Naive thymus-derived CD8-positive, alpha-beta T cell (primary cell): ENCODE measurements at regions of chr19 and their contacts with region 1.

Region 1: GRCh38 chr19:56121180-56122167 is at the start of gene ZNF787:
- DNase-seq: peak; percentile 94 to 99 (median 96)
- ATAC-seq: peak; percentile 85 to 91
- H3K4me3 Mint-ChIP-seq: peak within 1 kb of the TSS; percentile 85 to 97 (median 91)
- H3K27ac Mint-ChIP-seq: peak within 1 kb of the TSS; percentile 85 to 98 (median 96)
- H3K4me1 Mint-ChIP-seq: peaks cover 13 to 47% (median 38%) of the 10 kb centered on the region in 4 donors
- H3K27me3 Mint-ChIP-seq: no peaks in the 10 kb centered on the region
- polyA plus RNA-seq, gene ZNF787: 0.49 to 1.9 (median 1.2) TPM

Region 2: DNA sequence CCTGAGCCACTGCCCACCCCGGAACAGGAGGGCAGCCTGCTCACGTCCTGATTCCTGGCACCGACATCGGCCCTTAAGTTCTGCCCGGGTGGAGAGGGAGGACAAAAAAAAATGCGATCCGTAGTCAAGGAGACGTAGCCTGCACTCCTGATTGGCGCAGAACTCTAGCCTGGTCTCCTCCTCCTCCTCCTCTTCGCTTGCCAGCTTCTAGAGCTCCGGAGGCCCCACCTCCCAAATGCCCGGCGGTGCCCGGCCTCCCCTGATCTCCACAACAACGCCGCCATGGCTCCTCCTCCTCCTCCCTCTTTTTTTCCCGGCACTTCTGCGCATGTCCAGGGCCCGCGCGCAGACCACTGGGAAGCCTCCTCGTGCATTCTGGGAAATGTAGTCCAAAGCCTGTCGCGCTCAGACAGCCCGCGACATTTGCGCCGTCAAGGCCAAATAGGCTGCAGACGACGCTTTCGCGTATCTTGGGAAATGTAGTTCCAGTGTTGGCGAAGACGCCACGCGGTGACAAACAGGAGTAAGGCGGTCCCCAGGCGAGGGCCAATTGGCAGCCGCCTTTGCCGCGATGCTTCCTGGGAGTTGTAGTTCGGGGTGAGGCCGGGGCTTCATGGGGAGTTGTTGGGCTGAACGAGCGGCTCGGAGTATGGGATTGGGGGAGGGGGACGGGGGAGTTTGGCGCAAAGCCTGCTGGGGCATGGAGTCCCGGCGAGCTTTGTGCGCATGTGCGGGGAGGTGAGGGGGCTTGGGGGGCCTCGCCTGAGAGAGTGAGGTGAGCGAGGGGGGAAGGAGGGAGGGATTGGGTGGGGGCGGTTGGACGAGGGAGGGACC is 19.3 kb after region 1 on chr19 and contains the start of gene ZNF444:
- POLR2A ChIA-PET with region 1: interaction called, 76 read pairs
- DNase-seq: peak; percentile 95 to 100 (median 100)
- ATAC-seq: peak; percentile 88 to 89
- H3K4me3 Mint-ChIP-seq: peak within 1 kb of the TSS; percentile 90 to 98 (median 94)
- H3K27ac Mint-ChIP-seq: peak within 1 kb of the TSS; percentile 91 to 98 (median 96)
- H3K4me1 Mint-ChIP-seq: peaks cover 24 to 50% (median 46%) of the 10 kb centered on the region in 4 donors
- H3K27me3 Mint-ChIP-seq: no peaks in the 10 kb centered on the region
- polyA plus RNA-seq, gene ZNF444: 12.9 to 26.9 (median 19.2) TPM

Region 3: DNA sequence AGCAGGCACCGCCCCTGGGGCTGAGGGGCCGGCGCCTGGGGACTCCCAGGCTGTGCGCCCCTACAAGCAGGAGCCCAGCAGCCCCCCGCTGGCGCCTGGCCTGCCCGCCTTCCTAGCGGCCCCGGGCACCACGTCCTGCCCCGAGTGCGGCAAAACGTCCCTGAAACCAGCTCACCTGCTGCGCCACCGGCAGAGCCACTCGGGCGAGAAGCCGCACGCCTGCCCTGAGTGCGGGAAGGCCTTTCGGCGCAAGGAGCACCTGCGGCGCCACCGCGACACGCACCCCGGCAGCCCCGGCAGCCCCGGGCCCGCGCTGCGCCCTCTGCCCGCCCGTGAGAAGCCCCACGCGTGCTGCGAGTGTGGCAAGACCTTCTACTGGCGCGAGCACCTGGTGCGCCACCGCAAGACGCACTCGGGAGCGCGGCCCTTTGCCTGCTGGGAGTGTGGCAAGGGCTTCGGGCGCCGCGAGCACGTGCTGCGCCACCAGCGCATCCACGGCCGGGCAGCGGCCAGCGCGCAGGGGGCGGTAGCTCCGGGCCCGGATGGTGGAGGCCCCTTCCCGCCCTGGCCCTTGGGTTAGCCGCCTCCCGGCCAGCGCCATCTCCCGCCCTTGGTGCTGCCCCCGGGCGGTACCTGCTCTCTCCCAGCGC is 38.3 kb after region 1 on chr19:
- POLR2A ChIA-PET with region 1: no interaction called
- DNase-seq: no peak
- ATAC-seq: no peak
- H3K4me3 Mint-ChIP-seq: no peak overlapping the region
- H3K27ac Mint-ChIP-seq: no peak overlapping the region
- H3K4me1 Mint-ChIP-seq: peaks cover 2 to 13% (median 8%) of the 10 kb centered on the region in 4 donors
- H3K27me3 Mint-ChIP-seq: peaks cover 0 to under 1% (median 0%) of the 10 kb centered on the region in 5 donors

Region 4: GRCh38 chr19:56199686-56200085 is 78.2 kb after region 1 on chr19:
- POLR2A ChIA-PET with region 1: no interaction called
- DNase-seq: no peak
- ATAC-seq: no peak
- H3K4me3 Mint-ChIP-seq: no peak overlapping the region
- H3K27ac Mint-ChIP-seq: no peak overlapping the region
- H3K4me1 Mint-ChIP-seq: no peaks in the 10 kb centered on the region
- H3K27me3 Mint-ChIP-seq: peaks cover 0 to 11% (median 2%) of the 10 kb centered on the region in 5 donors

Region 5: DNA sequence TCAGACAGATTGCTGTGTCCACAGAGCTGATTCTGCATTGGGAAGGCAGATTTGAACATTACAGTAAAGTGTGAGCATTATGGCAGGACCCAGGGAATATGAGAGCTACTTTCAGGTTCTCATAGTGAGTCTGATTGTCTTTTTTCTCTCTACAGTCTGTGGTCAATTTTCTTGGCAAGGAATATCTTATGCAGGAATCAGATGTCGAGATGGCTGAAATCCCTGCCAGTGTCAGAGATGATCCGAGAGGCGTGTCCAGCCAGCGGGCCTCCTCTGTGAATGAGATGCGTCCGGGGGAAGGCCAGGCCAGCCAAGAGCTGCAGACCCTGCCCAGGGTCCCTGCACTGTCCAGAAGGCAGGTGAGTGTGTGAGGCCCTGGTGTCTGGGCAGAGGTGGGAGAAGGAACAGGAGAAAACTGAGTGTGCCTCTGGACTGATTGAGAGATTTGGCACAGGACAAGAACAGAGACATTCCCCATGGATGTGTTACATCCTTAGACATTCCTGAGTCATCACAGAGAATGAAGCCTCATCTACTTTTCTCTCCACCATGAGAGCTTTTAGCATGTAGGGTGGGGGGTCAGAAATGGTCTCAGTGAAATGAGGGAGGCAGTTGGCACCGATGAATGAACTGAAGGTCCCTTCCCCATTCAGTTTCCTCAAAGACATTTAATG is 123.7 kb after region 1 on chr19:
- POLR2A ChIA-PET with region 1: no interaction called
- DNase-seq: no peak
- ATAC-seq: no peak
- H3K4me3 Mint-ChIP-seq: no peak overlapping the region
- H3K27ac Mint-ChIP-seq: peak overlapping the region in 1 of 10 donors; percentile 51
- H3K4me1 Mint-ChIP-seq: no peaks in the 10 kb centered on the region
- H3K27me3 Mint-ChIP-seq: no peaks in the 10 kb centered on the region

Region 6: GRCh38 chr19:56314562-56315077 is 193.1 kb after region 1 on chr19 and contains the start of gene ZSCAN5A:
- POLR2A ChIA-PET with region 1: interaction called, 21 read pairs
- DNase-seq: peak; percentile 94 to 100 (median 96)
- ATAC-seq: peak; percentile 81 to 82
- H3K4me3 Mint-ChIP-seq: peak within 1 kb of the TSS; percentile 87 to 99 (median 95)
- H3K27ac Mint-ChIP-seq: peak within 1 kb of the TSS; percentile 98 to 99 (median 99)
- H3K4me1 Mint-ChIP-seq: peaks cover 8 to 32% (median 28%) of the 10 kb centered on the region in 4 donors
- H3K27me3 Mint-ChIP-seq: no peaks in the 10 kb centered on the region
- polyA plus RNA-seq, gene ZSCAN5A: 7.4 to 8.9 (median 7.4) TPM